ENCODE measurements at regions of chr1 and their contacts with region 1.

Region 1: DNA sequence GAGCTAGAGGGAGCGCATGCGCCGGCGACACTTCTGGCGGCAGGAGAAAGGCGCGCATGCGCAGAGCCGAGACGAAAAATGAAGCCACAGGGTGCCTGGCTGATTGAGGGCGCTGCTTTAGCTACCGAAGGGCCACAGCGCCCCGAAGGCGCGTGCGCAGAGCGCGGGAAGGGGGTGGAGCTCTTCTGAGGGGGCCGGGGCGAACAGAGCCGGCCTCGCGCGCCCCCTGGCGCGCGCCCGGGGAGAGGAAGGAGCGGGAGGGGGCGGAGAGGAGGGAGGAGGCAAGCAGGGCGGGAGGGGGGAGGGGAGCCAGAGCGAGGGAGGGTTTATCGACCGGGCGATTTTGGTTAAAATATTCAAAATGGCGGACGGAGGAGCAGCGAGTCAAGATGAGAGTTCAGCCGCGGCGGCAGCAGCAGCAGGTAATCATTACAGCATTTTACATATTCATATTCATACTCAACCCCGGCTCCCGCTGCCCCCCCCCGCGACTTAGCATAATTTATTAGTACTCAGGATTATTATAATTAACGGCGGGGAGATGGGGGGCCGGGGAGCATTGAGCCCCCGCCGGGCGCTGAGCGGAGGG is at the start of gene POU2F1:
- DNase-seq: peak; percentile 99
- ATAC-seq: peak; percentile 82
- H3K4me3 Mint-ChIP-seq: peak within 1 kb of the TSS; percentile 96
- H3K27ac Mint-ChIP-seq: peak within 1 kb of the TSS; percentile 99
- H3K4me1 Mint-ChIP-seq: peaks cover 43% of the 10 kb centered on the region
- H3K27me3 Mint-ChIP-seq: no peaks in the 10 kb centered on the region
- total RNA-seq, gene POU2F1: 20.3 to 21.6 TPM

Region 2: GRCh38 chr1:166838766-166839599 is 381.6 kb before region 1 on chr1 and contains the start of gene POGK:
- CTCF ChIA-PET with region 1: no interaction called
- POLR2A ChIA-PET with region 1: interaction called, 4 read pairs
- intact Hi-C with region 1: loop called in 1 of 2 experiments (anchors 1 kb)
- DNase-seq: peak; percentile 93
- ATAC-seq: peak; percentile 97
- H3K4me3 Mint-ChIP-seq: peak within 1 kb of the TSS; percentile 90
- H3K27ac Mint-ChIP-seq: peak within 1 kb of the TSS; percentile 98
- H3K4me1 Mint-ChIP-seq: peaks cover 56% of the 10 kb centered on the region
- H3K27me3 Mint-ChIP-seq: no peaks in the 10 kb centered on the region
- total RNA-seq, gene POGK: 36.2 to 40.6 TPM

Region 3: DNA sequence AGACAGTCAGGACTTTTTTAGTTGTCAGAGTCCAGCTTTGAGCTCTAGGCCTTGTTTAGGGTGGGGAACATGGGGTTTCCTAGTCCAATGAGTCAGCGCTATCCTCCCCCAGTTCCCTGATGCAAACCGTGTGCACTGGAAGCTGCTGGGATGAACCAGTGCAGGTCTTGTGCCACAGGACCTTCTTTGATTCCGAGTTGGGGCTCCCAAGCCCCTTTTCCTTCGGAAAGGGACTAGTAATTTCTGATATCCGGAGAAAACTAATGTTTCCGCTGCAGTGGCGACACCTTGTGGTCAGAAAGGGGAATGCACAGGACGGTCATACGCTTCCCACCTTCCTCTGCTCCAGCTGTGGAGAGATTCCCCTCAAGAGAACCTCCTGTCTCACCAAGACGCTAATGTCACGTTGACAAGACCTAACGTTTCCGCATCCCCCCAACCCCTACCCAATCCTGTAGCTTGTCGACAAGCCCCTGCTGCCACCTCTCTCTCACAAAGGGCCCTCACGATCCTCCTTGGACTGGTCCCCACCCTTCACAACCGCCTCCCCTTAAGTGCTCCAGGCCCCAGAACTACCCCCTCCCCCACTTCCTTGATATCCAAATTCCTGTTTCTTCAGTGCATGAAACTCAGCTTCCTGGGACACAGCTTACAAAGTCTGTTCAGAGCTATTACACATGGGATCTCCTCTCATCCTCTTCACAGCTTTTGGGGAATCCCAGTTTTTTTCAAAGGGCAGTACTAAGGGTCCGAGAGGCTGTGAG is 161.4 kb before region 1 on chr1:
- CTCF ChIA-PET with region 1: interaction called, 14 read pairs
- POLR2A ChIA-PET with region 1: interaction called, 4 read pairs
- intact Hi-C with region 1: no loop called
- DNase-seq: peak; percentile 85
- ATAC-seq: peak; percentile 55
- H3K4me3 Mint-ChIP-seq: no peak overlapping the region
- H3K27ac Mint-ChIP-seq: peak overlapping the region; percentile 61
- H3K4me1 Mint-ChIP-seq: peaks cover 7% of the 10 kb centered on the region
- H3K27me3 Mint-ChIP-seq: no peaks in the 10 kb centered on the region

Region 4: DNA sequence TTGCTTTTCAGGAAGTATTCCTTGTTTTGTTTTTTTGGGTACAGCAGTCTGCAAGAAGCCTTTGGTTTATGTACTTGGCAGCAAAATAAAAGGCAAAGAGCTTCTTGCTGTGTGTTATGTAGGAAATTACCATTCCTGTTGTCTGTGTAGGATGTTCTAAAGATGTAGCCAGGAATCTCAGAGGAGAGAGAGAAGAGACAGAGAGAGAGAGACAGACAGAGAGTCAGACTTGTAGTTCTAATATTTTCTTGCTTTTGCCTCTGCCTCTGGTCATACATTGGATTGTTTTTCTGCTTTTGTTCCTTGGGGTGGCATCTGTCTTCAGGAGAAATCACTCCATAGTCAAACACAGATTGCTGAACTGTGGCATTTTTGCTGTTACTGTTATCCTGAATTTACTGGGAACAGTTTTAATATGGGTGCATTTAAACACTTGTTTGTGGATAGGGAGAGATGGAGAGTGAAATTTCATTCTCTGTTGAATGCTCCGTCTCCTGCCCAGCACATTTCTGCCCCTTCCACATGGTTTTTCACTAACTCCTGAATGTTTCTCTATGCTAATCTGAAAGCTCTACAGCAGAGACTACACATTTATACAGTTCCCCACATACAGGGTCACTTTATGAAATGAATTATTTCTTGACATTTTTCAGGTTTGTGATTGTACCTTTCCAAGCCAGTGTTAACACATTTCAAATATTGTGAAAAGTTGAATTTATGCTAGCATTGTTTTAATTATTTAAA is 49.9 kb after region 1 on chr1:
- CTCF ChIA-PET with region 1: interaction called, 9 read pairs
- POLR2A ChIA-PET with region 1: no interaction called
- intact Hi-C with region 1: loop called (anchors 1 to 5 kb)
- DNase-seq: no peak
- ATAC-seq: no peak
- H3K4me3 Mint-ChIP-seq: no peak overlapping the region
- H3K27ac Mint-ChIP-seq: no peak overlapping the region
- H3K4me1 Mint-ChIP-seq: peaks cover 41% of the 10 kb centered on the region
- H3K27me3 Mint-ChIP-seq: no peaks in the 10 kb centered on the region

Region 5: DNA sequence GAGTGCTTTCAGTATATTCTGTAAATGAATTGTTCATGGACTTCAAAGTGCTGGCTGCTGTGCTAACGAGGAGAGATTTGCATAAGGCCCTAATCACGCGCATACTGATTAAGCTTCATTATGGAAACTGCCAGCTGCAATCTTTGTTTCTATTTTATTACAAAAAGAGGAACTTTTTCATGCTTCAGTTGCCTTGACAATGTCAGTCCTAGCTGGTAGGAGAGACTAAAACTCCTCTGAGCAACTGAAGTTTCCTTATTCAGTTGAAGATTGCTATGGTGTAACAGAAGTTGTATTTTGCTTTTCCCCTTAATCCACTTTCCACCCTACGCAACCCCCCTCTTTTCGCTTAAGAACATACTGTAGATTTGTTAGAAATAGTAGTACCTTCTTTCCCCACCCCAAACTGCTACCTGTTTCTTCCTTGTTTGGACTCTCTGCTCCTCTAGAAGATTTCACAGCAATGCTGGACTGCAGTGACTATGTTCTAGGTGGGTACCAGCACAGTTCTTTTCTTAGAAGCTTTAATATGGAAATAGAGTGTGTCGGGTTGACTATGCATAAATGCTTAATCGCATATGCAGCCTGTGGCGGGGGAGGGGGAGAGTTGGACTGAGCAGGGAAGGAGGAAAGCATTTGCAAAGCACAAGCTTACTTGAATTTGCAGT is 108.3 kb after region 1 on chr1:
- CTCF ChIA-PET with region 1: no interaction called
- POLR2A ChIA-PET with region 1: no interaction called
- intact Hi-C with region 1: no loop called
- DNase-seq: peak; percentile 17
- ATAC-seq: no peak
- H3K4me3 Mint-ChIP-seq: no peak overlapping the region
- H3K27ac Mint-ChIP-seq: no peak overlapping the region
- H3K4me1 Mint-ChIP-seq: peaks cover 37% of the 10 kb centered on the region
- H3K27me3 Mint-ChIP-seq: no peaks in the 10 kb centered on the region

Region 6: GRCh38 chr1:167533851-167534300 is 313.2 kb after region 1 on chr1:
- CTCF ChIA-PET with region 1: interaction called, 3 read pairs
- POLR2A ChIA-PET with region 1: no interaction called
- intact Hi-C with region 1: loop called in 1 of 2 experiments (anchors 5 kb)
- DNase-seq: peak; percentile 78
- ATAC-seq: peak; percentile 90
- H3K4me3 Mint-ChIP-seq: no peak overlapping the region
- H3K27ac Mint-ChIP-seq: no peak overlapping the region
- H3K4me1 Mint-ChIP-seq: peaks cover 4% of the 10 kb centered on the region
- H3K27me3 Mint-ChIP-seq: no peaks in the 10 kb centered on the region

Region 7: DNA sequence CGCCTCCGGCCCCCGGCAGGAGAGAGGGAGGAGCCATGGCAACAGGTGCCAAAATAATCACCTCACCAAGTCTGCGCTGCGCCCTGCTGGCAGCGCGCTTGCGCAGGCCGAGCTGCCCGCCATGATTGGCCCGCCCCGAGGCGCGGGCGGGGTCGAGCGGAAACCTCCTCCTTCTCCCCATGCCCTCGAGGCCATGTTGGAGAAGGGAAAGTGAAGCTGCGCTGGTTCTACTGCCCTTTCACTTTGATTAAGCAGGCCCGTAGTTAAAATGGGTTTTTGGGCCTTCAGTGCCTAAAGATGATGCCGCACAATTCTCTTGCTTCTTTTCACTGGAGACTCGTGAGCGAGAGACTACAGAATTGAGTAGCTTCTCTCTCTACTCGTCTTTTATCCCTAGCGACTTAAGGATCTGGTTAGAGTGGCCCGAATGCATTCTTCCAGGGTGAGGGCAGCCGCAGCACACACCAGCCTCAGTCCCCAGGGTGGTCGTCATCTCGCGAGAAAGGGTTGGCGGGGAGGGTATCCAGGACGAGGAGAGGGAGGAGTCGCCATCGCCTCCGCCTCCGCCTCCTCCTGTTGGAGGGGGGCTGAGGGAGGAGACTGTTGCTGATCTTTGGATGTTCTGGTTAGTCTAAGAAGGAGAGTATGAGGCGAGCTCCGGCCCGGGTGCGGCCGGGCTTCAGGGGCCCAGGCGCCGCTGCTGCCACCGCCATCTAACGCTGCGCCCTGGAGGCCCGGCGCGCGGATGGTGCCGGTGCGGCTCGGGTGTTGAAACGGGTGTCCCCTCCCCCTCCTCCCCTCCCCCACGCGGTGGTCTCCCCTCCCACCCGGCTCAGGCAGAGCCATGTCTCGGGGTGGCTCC is 715.7 kb after region 1 on chr1 and contains the start of gene DCAF6:
- CTCF ChIA-PET with region 1: no interaction called
- POLR2A ChIA-PET with region 1: no interaction called
- intact Hi-C with region 1: loop called in 1 of 2 experiments (anchors 1 kb)
- DNase-seq: peak; percentile 97
- ATAC-seq: peak; percentile 84
- H3K4me3 Mint-ChIP-seq: peak within 1 kb of the TSS; percentile 89
- H3K27ac Mint-ChIP-seq: peak within 1 kb of the TSS; percentile 97
- H3K4me1 Mint-ChIP-seq: peaks cover 34% of the 10 kb centered on the region
- H3K27me3 Mint-ChIP-seq: no peaks in the 10 kb centered on the region
- total RNA-seq, gene DCAF6: 25.6 to 28.8 TPM